Activated CD4-positive, alpha-beta memory T cell treated with anti-CD3 and anti-CD28 coated beads for 36 hours (primary cell): ENCODE measurements at regions of chr12 and their contacts with region 1.

Region 1: GRCh38 chr12:76083904-76084862 is at the start of gene NAP1L1:
- DNase-seq: peak; percentile 98
- H3K4me3 Mint-ChIP-seq: peak within 1 kb of the TSS; percentile 93
- H3K27ac Mint-ChIP-seq: peak within 1 kb of the TSS; percentile 99
- H3K4me1 Mint-ChIP-seq: peaks cover 42% of the 10 kb centered on the region
- H3K27me3 Mint-ChIP-seq: no peaks in the 10 kb centered on the region
- total RNA-seq, gene NAP1L1: 889 to 895 TPM

Region 2: GRCh38 chr12:75390899-75391538 is 693.2 kb before region 1 on chr12 and contains the start of gene GLIPR1L2:
- CTCF ChIA-PET with region 1: no interaction called
- POLR2A ChIA-PET with region 1: interaction called, 4 read pairs
- intact Hi-C with region 1: loop called (anchors 1 kb)
- DNase-seq: peak; percentile 95
- H3K4me3 Mint-ChIP-seq: peak within 1 kb of the TSS; percentile 86
- H3K27ac Mint-ChIP-seq: peak within 1 kb of the TSS; percentile 93
- H3K4me1 Mint-ChIP-seq: peaks cover 40% of the 10 kb centered on the region
- H3K27me3 Mint-ChIP-seq: no peaks in the 10 kb centered on the region
- total RNA-seq, gene GLIPR1L2: 0.17 to 0.24 TPM

Region 3: DNA sequence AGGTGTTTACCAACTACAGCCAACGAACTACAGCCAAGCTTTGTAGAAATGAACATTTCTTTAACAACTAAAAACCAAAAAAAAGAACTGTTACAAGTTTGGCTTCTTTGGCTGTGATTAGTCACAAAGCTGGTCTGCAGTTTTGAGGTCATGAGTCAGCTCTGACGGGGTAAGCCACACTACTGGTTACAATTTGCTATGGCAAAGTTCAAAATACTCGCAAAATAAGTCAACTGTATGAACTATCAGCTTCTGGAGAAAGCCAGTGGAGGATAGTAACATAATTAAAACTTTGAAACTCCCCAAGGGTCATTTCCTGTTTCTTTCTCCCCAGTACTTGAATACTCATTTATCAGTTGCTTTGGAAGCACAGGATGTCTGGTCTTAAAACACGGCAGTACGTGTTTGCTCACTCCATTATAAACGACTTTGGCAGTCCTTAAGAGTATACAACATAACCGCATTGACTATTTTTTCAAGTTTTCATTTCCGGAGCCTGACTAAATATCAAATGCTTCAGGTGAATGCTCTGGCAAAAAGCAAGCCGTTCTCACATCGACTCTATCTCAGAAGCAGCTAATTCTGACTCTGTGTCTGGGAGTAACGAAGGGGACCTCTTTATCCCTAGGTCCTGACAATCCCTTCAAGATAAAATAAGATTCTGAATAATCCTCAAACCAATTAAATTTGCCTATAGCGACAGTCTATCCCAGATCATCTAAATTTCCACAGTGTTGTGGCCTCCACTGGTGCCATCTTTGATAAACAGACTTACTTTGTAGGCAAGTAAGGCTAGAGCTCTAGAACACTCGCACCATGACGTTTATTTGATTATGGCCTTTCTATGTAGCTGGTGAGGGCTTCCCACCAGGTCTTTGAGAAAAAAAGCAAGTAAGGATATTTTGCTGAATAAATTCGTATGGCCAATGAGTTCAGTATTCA is 63.2 kb before region 1 on chr12:
- CTCF ChIA-PET with region 1: no interaction called
- POLR2A ChIA-PET with region 1: interaction called, 6 read pairs
- intact Hi-C with region 1: loop called (anchors 1 kb)
- DNase-seq: peak; percentile 90
- H3K4me3 Mint-ChIP-seq: peak overlapping the region; percentile 68
- H3K27ac Mint-ChIP-seq: peak overlapping the region; percentile 99
- H3K4me1 Mint-ChIP-seq: peaks cover 60% of the 10 kb centered on the region
- H3K27me3 Mint-ChIP-seq: no peaks in the 10 kb centered on the region

Region 4: GRCh38 chr12:76183459-76184186 is 99.4 kb after region 1 on chr12:
- CTCF ChIA-PET with region 1: no interaction called
- POLR2A ChIA-PET with region 1: no interaction called
- intact Hi-C with region 1: loop called (anchors 2 kb)
- DNase-seq: peak; percentile 81
- H3K4me3 Mint-ChIP-seq: no peak overlapping the region
- H3K27ac Mint-ChIP-seq: no peak overlapping the region
- H3K4me1 Mint-ChIP-seq: peaks cover 12% of the 10 kb centered on the region
- H3K27me3 Mint-ChIP-seq: peaks cover 56% of the 10 kb centered on the region

Region 5: DNA sequence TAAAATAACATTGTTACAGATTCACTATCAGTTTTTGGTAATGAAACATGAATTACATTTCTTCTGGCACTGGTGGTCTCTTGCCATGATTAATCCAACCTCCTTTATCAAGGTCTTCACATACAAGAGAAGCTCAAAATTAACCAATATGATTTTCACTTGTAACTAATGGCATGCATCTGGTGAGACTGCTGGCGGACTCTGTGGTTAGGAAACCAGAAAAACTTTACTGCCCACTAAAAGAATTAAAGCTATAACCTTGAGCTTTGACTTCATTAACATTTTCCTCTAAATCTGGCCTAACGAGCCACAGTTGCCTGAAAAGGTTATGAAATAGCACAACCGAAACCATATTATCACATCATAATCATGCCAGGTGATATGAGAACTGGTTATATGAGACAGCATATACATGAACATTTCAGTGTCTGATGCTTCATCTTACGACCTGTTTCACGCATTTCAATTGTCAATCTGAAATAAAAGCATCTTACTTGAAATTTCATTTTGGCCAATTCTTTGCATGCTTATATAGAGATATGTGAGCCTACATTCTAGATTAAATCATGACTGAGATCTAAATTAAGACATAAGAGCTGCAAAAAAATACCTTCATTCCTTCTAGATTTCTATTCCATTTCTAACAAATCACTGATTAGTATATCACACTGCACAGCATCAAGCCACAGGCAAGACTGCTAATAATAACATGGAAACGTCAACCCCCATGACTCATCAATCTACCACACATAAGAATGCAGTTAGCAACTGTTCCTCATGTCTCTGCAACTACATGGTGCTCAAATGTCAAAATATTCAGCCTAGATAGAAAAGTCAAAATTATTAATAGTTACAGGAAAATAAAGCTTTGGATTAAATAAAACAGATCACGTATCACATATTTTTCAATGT is 386.1 kb after region 1 on chr12:
- CTCF ChIA-PET with region 1: no interaction called
- POLR2A ChIA-PET with region 1: no interaction called
- intact Hi-C with region 1: loop called (anchors 5 kb)
- DNase-seq: no peak
- H3K4me3 Mint-ChIP-seq: no peak overlapping the region
- H3K27ac Mint-ChIP-seq: no peak overlapping the region
- H3K4me1 Mint-ChIP-seq: peaks cover 13% of the 10 kb centered on the region
- H3K27me3 Mint-ChIP-seq: no peaks in the 10 kb centered on the region

Region 6: GRCh38 chr12:76763743-76764675 is 679.8 kb after region 1 on chr12 and contains the start of gene ZDHHC17:
- CTCF ChIA-PET with region 1: no interaction called
- POLR2A ChIA-PET with region 1: no interaction called
- intact Hi-C with region 1: loop called (anchors 1 kb)
- DNase-seq: peak; percentile 93
- H3K4me3 Mint-ChIP-seq: peak within 1 kb of the TSS; percentile 99
- H3K27ac Mint-ChIP-seq: peak within 1 kb of the TSS; percentile 93
- H3K4me1 Mint-ChIP-seq: peaks cover 34% of the 10 kb centered on the region
- H3K27me3 Mint-ChIP-seq: no peaks in the 10 kb centered on the region
- total RNA-seq, gene ZDHHC17: 18.8 to 20.0 TPM